CD4-positive, alpha-beta T cell (primary cell): ENCODE measurements at regions of chr14 and their contacts with region 1.

Region 1: GRCh38 chr14:91323671-91324605 is 79.4 kb upstream of the GPR68 start:
- DNase-seq: peak; percentile 87 to 97 (median 92)
- ATAC-seq: peak; percentile 80
- H3K4me3 ChIP-seq: peak overlapping the region; percentile 47
- H3K4me3 Mint-ChIP-seq: peak overlapping the region; percentile 81
- H3K27ac ChIP-seq: peak overlapping the region; percentile 93 to 95
- H3K27ac Mint-ChIP-seq: peak overlapping the region; percentile 97
- H3K4me1 ChIP-seq: peaks cover 97% of the 10 kb centered on the region
- H3K4me1 Mint-ChIP-seq: peaks cover 80% of the 10 kb centered on the region
- H3K27me3 ChIP-seq: no peaks in the 10 kb centered on the region
- H3K27me3 Mint-ChIP-seq: no peaks in the 10 kb centered on the region
- CTCF ChIP-seq: peak; percentile 95

Region 2: DNA sequence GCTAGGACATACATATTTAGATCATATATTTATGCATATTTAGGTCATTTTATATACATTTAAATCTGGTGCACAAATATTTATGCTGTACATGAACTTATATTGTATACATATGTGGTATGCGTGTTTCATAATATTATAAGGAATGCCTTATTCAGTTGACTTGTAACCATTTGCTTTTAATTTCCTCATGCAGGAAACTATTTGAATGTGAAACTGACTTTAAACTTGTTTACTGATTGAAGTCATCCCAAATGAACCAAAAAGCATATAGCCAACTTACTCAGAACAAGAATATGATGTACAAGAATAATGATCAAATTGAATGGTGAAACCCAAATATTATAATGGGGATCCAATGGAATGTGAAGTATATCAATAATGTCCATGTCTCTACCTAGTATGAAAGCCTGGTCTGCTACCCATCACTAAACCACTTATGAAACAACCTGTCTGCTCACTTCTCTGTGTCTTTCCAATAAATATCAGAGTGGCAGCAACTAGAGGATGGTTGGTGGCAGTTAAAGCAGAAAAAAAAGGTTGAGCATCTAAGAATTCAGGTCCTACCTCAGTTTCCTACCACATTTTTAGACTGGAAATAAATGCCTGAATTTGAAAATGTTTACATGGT is 301.8 kb before region 1 on chr14:
- CTCF ChIA-PET with region 1: no interaction called
- POLR2A ChIA-PET with region 1: no interaction called
- intact Hi-C with region 1: no loop called
- DNase-seq: peak in 1 of 14 experiments; percentile 39
- ATAC-seq: no peak
- H3K4me3 ChIP-seq: peak overlapping the region; percentile 53
- H3K4me3 Mint-ChIP-seq: peak overlapping the region; percentile 85
- H3K27ac ChIP-seq: peak overlapping the region; percentile 59 to 82
- H3K27ac Mint-ChIP-seq: peak overlapping the region; percentile 59
- H3K4me1 ChIP-seq: peaks cover 18% of the 10 kb centered on the region
- H3K4me1 Mint-ChIP-seq: peaks cover 74% of the 10 kb centered on the region
- H3K27me3 ChIP-seq: no peaks in the 10 kb centered on the region
- H3K27me3 Mint-ChIP-seq: no peaks in the 10 kb centered on the region
- CTCF ChIP-seq: no peak

Region 3: DNA sequence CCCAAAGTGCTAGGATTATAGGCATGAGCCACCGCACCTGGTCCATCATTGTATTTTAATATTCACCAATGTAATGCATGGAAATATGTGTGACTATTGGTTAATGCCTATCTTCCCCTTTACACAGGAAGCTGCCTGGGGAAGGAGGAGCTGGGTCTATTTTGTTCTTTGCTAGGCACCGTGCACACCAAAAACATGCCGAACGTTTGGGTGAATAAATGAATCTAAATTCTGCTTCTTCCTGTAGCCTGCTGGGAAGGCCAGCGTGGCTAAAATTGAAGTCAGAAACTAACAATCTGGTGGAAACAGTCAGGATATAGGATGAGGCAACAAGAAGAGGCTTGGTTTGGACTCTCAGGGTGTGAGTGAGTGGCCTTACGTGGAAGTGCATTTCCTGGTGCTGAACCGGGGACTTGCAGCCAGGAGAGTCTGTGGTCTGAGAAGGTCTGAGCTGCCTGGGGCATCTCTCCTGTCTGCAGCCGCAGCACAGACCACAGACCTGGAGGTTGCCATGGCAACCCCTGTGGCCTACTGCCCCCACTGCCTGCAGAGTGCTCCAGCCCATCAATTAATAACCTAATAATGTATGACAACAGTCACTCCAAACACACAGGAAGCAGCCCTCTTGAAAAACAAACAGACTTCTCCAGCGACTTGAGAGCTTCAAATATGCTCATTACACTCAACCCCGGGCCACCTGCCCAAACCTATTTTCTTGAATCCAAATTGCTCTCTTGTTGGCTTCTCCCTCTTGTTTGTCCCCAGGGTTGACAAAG is 73.9 kb before region 1 on chr14:
- CTCF ChIA-PET with region 1: no interaction called
- POLR2A ChIA-PET with region 1: no interaction called
- intact Hi-C with region 1: no loop called
- DNase-seq: peak in 7 of 14 experiments; percentile 27 to 81 (median 52)
- ATAC-seq: no peak
- H3K4me3 ChIP-seq: no peak overlapping the region
- H3K4me3 Mint-ChIP-seq: peak overlapping the region; percentile 79
- H3K27ac ChIP-seq: peak overlapping the region; percentile 59 to 68
- H3K27ac Mint-ChIP-seq: peak overlapping the region; percentile 78
- H3K4me1 ChIP-seq: peaks cover 96% of the 10 kb centered on the region
- H3K4me1 Mint-ChIP-seq: peaks cover 87% of the 10 kb centered on the region
- H3K27me3 ChIP-seq: no peaks in the 10 kb centered on the region
- H3K27me3 Mint-ChIP-seq: no peaks in the 10 kb centered on the region
- CTCF ChIP-seq: no peak

Region 4: DNA sequence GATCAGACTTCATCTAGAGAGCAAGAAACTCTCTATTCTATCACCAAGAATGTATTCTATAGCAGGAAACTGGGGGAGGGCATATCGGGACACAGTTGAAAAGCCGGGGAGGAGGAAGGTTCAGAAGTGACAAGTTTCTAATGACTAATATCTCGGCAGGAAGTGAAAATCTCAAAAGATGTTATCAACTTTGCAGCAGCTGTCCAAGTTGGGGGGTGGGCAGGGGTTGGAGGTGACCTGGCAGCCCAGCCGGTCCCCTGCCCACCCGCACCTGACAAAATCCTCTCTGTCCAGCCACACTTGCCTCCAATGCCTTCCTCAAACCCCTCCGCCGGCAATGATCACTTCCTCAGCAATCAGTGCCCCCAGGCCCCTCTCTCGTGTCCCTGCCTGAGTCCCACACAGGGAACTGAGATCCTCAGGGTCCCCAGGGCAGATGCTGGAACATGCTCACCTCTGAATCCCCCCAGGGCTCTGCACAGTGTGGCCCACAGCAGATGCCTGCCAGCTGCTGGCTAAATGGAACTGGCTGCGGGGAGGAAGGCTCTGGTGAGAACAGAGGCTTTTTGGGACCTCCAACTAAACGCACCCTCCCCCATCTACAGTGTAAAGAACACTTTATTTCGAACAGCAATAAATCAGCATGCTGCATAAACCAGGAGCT is 49.8 kb after region 1 on chr14:
- CTCF ChIA-PET with region 1: interaction called, 14 read pairs
- POLR2A ChIA-PET with region 1: interaction called, 31 read pairs
- intact Hi-C with region 1: loop called (anchors 2 kb)
- DNase-seq: peak in 9 of 14 experiments; percentile 47 to 82 (median 61)
- ATAC-seq: peak; percentile 64
- H3K4me3 ChIP-seq: peak overlapping the region; percentile 43
- H3K4me3 Mint-ChIP-seq: peak overlapping the region; percentile 90
- H3K27ac ChIP-seq: peak overlapping the region; percentile 69 to 80
- H3K27ac Mint-ChIP-seq: peak overlapping the region; percentile 96
- H3K4me1 ChIP-seq: peaks cover 100% of the 10 kb centered on the region
- H3K4me1 Mint-ChIP-seq: peaks cover 100% of the 10 kb centered on the region
- H3K27me3 ChIP-seq: no peaks in the 10 kb centered on the region
- H3K27me3 Mint-ChIP-seq: no peaks in the 10 kb centered on the region
- CTCF ChIP-seq: no peak

Region 5: GRCh38 chr14:91396959-91397815 is 73.2 kb after region 1 on chr14:
- CTCF ChIA-PET with region 1: interaction called, 29 read pairs
- POLR2A ChIA-PET with region 1: interaction called, 7 read pairs
- intact Hi-C with region 1: no loop called
- DNase-seq: peak in 13 of 14 experiments; percentile 48 to 87 (median 64)
- ATAC-seq: peak; percentile 76
- H3K4me3 ChIP-seq: peak overlapping the region; percentile 67
- H3K4me3 Mint-ChIP-seq: peak overlapping the region; percentile 78
- H3K27ac ChIP-seq: peak overlapping the region; percentile 26 to 66
- H3K27ac Mint-ChIP-seq: peak overlapping the region; percentile 98
- H3K4me1 ChIP-seq: peaks cover 98% of the 10 kb centered on the region
- H3K4me1 Mint-ChIP-seq: peaks cover 90% of the 10 kb centered on the region
- H3K27me3 ChIP-seq: no peaks in the 10 kb centered on the region
- H3K27me3 Mint-ChIP-seq: no peaks in the 10 kb centered on the region
- CTCF ChIP-seq: no peak

Region 6: GRCh38 chr14:91402771-91403600 is 79.0 kb after region 1 on chr14:
- CTCF ChIA-PET with region 1: interaction called, 29 read pairs
- POLR2A ChIA-PET with region 1: interaction called, 8 read pairs
- intact Hi-C with region 1: no loop called
- DNase-seq: peak in 1 of 14 experiments; percentile 27
- ATAC-seq: no peak
- H3K4me3 ChIP-seq: peak overlapping the region; percentile 17
- H3K4me3 Mint-ChIP-seq: peak overlapping the region; percentile 81
- H3K27ac ChIP-seq: peak overlapping the region; percentile 70 to 85
- H3K27ac Mint-ChIP-seq: peak overlapping the region; percentile 98
- H3K4me1 ChIP-seq: peaks cover 98% of the 10 kb centered on the region
- H3K4me1 Mint-ChIP-seq: peaks cover 90% of the 10 kb centered on the region
- H3K27me3 ChIP-seq: no peaks in the 10 kb centered on the region
- H3K27me3 Mint-ChIP-seq: no peaks in the 10 kb centered on the region
- CTCF ChIP-seq: no peak

Region 7: GRCh38 chr14:91424813-91425530 is 101.0 kb after region 1 on chr14:
- CTCF ChIA-PET with region 1: interaction called, 53 read pairs
- POLR2A ChIA-PET with region 1: interaction called, 6 read pairs
- intact Hi-C with region 1: no loop called
- DNase-seq: no peak
- ATAC-seq: no peak
- H3K4me3 ChIP-seq: no peak overlapping the region
- H3K4me3 Mint-ChIP-seq: no peak overlapping the region
- H3K27ac ChIP-seq: no peak overlapping the region
- H3K27ac Mint-ChIP-seq: no peak overlapping the region
- H3K4me1 ChIP-seq: peaks cover 7% of the 10 kb centered on the region
- H3K4me1 Mint-ChIP-seq: peaks cover 30% of the 10 kb centered on the region
- H3K27me3 ChIP-seq: no peaks in the 10 kb centered on the region
- H3K27me3 Mint-ChIP-seq: no peaks in the 10 kb centered on the region
- CTCF ChIP-seq: no peak

Region 8: DNA sequence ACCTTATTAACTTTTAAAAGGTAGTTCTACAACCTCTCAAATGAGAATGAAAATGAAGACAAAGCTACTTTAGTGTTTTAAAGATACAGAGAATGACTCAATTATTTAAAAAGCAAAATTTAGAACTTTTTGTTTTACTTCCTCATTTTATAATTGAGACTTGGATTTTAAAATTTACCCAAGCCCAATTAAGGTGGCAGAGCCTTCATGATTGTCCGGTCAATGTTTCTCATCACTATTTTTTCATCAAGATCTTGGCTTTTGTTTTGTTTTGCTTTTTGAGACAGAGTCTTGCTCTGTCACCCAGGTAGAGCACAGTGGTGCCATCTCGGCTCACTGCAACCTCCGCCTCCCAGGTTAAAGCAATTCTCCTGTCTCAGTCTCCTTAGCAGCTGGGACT is 153.4 kb after region 1 on chr14:
- CTCF ChIA-PET with region 1: interaction called, 6 read pairs
- POLR2A ChIA-PET with region 1: no interaction called
- intact Hi-C with region 1: loop called in 1 of 2 experiments (anchors 5 kb)
- DNase-seq: no peak
- ATAC-seq: no peak
- H3K4me3 ChIP-seq: no peak overlapping the region
- H3K4me3 Mint-ChIP-seq: no peak overlapping the region
- H3K27ac ChIP-seq: no peak overlapping the region
- H3K27ac Mint-ChIP-seq: no peak overlapping the region
- H3K4me1 ChIP-seq: no peaks in the 10 kb centered on the region
- H3K4me1 Mint-ChIP-seq: peaks cover 51% of the 10 kb centered on the region
- H3K27me3 ChIP-seq: no peaks in the 10 kb centered on the region
- H3K27me3 Mint-ChIP-seq: no peaks in the 10 kb centered on the region
- CTCF ChIP-seq: no peak

Region 9: GRCh38 chr14:91510174-91511042 is 186.5 kb after region 1 on chr14 and contains the start of gene PPP4R3A:
- CTCF ChIA-PET with region 1: no interaction called
- POLR2A ChIA-PET with region 1: interaction called, 6 read pairs
- intact Hi-C with region 1: loop called (anchors 1 to 5 kb)
- DNase-seq: peak; percentile 82 to 98 (median 90)
- ATAC-seq: peak; percentile 85
- H3K4me3 ChIP-seq: peak within 1 kb of the TSS; percentile 90
- H3K4me3 Mint-ChIP-seq: peak within 1 kb of the TSS; percentile 100
- H3K27ac ChIP-seq: peak within 1 kb of the TSS; percentile 99
- H3K27ac Mint-ChIP-seq: peak within 1 kb of the TSS; percentile 100
- H3K4me1 ChIP-seq: peaks cover 23% of the 10 kb centered on the region
- H3K4me1 Mint-ChIP-seq: peaks cover 44% of the 10 kb centered on the region
- H3K27me3 ChIP-seq: no peaks in the 10 kb centered on the region
- H3K27me3 Mint-ChIP-seq: no peaks in the 10 kb centered on the region
- CTCF ChIP-seq: no peak
- total RNA-seq, gene PPP4R3A: 189 to 205 TPM